Activated CD4-positive, alpha-beta T cell treated with anti-CD3 and anti-CD28 coated beads for 36 hours (primary cell): ENCODE measurements at regions of chr16 and their contacts with region 1.

Region 1: DNA sequence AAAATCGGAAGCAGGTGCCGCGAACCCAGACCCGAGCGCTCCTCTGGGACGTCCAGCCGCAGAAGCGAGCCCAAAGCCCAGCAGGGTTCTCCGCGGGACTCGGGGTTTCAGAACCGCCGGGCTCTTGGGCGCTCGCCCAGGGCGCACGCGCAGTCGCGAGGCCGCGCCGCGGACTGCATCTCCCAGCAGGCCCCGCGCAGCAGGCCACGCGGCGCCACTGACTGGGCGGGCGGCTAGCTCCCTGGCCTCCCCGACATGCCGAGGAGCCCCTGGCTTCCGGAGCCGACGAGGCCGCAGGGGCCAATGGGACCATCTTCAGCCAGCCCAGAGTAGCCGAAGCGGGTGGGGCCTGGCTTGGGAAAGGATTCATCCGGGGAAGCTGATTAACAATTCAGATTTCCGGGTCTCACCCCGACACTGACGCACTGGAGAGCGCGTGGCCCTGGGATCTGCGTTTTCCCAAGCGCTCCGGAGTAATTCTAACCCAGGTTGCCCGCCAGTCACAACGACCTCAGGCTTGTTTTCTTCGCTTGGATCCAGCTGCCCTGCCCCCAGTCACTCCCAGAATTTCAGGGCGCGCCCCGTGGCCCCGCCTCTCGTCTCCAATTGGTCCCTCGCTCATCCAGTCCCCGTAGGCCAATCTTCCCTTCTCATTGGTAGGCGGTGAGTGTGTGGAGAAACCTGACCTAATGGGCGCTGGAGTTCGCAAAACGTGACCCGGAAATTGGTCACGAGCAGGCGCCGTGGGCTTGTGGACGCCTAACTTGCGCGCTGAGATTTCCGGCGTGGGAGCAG is at the start of gene ZNF263:
- DNase-seq: peak; percentile 96
- ATAC-seq: peak; percentile 91
- H3K4me3 Mint-ChIP-seq: peak within 1 kb of the TSS; percentile 90
- H3K27ac Mint-ChIP-seq: peak within 1 kb of the TSS; percentile 97
- H3K4me1 Mint-ChIP-seq: peaks cover 24% of the 10 kb centered on the region
- H3K27me3 Mint-ChIP-seq: no peaks in the 10 kb centered on the region
- total RNA-seq, gene ZNF263: 19.2 to 19.6 TPM

Region 2: GRCh38 chr16:3123986-3124886 is 158.7 kb before region 1 on chr16:
- CTCF ChIA-PET with region 1: no interaction called
- POLR2A ChIA-PET with region 1: no interaction called
- intact Hi-C with region 1: loop called in 1 of 2 experiments (anchors 1 kb)
- DNase-seq: peak; percentile 99
- ATAC-seq: peak; percentile 92
- H3K4me3 Mint-ChIP-seq: peak overlapping the region; percentile 90
- H3K27ac Mint-ChIP-seq: peak overlapping the region; percentile 90
- H3K4me1 Mint-ChIP-seq: peaks cover 30% of the 10 kb centered on the region
- H3K27me3 Mint-ChIP-seq: no peaks in the 10 kb centered on the region

Region 3: GRCh38 chr16:3144321-3144983 is 138.5 kb before region 1 on chr16:
- CTCF ChIA-PET with region 1: no interaction called
- POLR2A ChIA-PET with region 1: no interaction called
- intact Hi-C with region 1: no loop called
- DNase-seq: no peak
- ATAC-seq: no peak
- H3K4me3 Mint-ChIP-seq: no peak overlapping the region
- H3K27ac Mint-ChIP-seq: no peak overlapping the region
- H3K4me1 Mint-ChIP-seq: peaks cover 4% of the 10 kb centered on the region
- H3K27me3 Mint-ChIP-seq: no peaks in the 10 kb centered on the region

Region 4: DNA sequence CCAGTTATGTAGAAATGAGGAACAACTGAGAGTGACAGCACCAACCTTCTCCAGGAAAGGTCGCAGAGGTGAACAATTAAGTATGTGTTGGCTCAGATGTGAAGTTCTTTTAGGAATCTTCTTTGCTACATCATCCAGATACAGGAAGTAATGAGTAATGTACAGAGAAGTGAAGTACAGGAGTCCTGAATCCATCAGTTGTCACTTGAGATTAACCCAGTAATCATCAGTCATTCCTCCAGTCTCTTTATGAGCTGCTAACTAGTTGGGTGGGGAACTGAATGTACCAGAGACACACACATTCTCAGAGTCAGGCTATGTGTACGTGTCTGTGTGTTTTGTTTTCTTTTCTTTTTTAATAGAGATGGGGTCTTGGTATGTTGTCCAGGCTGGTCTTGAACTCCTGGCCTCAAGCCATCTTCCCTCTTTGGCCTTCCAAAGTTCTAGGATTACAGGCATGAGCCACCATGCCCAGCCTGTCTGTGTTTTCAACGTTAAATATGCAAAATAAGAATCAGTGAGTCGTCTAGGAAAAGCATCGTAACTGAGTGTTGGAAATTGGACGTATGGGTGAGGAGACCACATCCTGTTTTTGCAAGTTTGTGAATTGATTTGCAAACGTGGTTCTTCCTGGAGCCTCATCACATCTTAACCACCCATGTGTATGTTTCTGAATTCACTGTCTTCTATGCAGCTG is 67.9 kb before region 1 on chr16:
- CTCF ChIA-PET with region 1: no interaction called
- POLR2A ChIA-PET with region 1: interaction called, 5 read pairs
- intact Hi-C with region 1: loop called in 1 of 2 experiments (anchors 1 kb)
- DNase-seq: peak; percentile 49
- ATAC-seq: peak; percentile 82
- H3K4me3 Mint-ChIP-seq: peak overlapping the region; percentile 4
- H3K27ac Mint-ChIP-seq: peak overlapping the region; percentile 94
- H3K4me1 Mint-ChIP-seq: peaks cover 32% of the 10 kb centered on the region
- H3K27me3 Mint-ChIP-seq: no peaks in the 10 kb centered on the region

Region 5: DNA sequence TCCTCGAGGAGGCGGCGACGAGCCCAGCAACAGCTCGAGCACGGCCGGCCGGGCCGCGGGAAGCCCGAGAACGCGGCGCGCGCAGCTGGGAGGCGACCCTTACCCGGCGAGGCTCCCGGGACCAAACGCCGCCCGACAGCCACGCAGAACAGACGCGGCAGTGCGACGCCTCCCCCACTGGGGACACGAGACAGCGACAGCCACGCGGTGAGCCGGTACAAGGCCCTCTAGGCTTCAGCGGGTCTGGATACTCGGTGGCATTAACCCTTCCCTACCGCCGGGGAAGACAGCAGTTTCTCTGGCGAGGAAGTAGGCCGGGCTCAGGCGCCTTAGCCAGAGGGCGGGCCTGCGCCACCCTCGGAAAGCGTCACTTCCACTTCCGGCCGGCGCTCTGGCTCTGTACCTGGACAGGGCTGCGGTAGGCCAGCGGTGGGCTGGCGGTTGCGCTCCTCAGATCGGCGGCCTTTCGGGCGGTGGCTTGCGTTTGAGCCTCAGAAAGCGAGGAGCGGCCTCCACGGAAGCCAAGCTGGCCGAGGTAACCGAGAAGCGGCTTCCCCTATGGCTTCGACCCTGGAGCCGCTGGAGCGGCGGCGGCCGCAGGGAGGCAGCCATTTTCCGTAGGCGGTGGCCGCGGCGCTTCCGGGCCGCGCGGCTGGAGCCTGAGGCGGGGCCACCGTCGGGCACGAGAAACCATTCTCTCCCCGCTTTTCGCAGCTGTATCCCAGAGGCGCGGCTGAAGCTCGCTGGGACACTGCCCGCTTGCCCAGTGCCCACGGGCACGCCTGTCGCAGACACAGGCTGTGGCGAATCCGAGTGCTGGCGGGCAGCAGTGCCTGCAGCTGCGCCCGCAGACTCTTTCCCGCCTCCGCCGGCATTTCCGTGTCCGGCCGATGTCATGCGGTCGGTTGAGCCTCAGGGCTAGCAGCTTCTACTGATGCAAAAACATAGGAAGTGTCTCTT is 22.5 kb after region 1 on chr16 and contains the starts of genes TIGD7 and ZNF75A:
- CTCF ChIA-PET with region 1: interaction called, 3 read pairs
- POLR2A ChIA-PET with region 1: no interaction called
- intact Hi-C with region 1: loop called (anchors 1 to 2 kb)
- DNase-seq: peak; percentile 90
- ATAC-seq: peak; percentile 99
- H3K4me3 Mint-ChIP-seq: peak within 1 kb of the TSS; percentile 75
- H3K27ac Mint-ChIP-seq: peak within 1 kb of the TSS; percentile 84
- H3K4me1 Mint-ChIP-seq: peaks cover 15% of the 10 kb centered on the region
- H3K27me3 Mint-ChIP-seq: no peaks in the 10 kb centered on the region
- total RNA-seq, gene TIGD7: 2.9 TPM
- total RNA-seq, gene ZNF75A: 23.2 to 27.4 TPM

Region 6: GRCh38 chr16:3443108-3444031 is 160.4 kb after region 1 on chr16 and contains the starts of genes NAA60 and ZNF597:
- CTCF ChIA-PET with region 1: no interaction called
- POLR2A ChIA-PET with region 1: interaction called, 3 read pairs
- intact Hi-C with region 1: loop called in 1 of 2 experiments (anchors 1 kb)
- DNase-seq: peak; percentile 88
- ATAC-seq: peak; percentile 91
- H3K4me3 Mint-ChIP-seq: peak within 1 kb of the TSS; percentile 97
- H3K27ac Mint-ChIP-seq: peak within 1 kb of the TSS; percentile 93
- H3K4me1 Mint-ChIP-seq: peaks cover 13% of the 10 kb centered on the region
- H3K27me3 Mint-ChIP-seq: no peaks in the 10 kb centered on the region
- total RNA-seq, gene NAA60: 25.9 to 38.9 TPM
- total RNA-seq, gene ZNF597: 1.9 to 2.4 TPM